GM23248 (cell line): ENCODE measurements at regions of chr16 and their contacts with region 1.

Region 1: DNA sequence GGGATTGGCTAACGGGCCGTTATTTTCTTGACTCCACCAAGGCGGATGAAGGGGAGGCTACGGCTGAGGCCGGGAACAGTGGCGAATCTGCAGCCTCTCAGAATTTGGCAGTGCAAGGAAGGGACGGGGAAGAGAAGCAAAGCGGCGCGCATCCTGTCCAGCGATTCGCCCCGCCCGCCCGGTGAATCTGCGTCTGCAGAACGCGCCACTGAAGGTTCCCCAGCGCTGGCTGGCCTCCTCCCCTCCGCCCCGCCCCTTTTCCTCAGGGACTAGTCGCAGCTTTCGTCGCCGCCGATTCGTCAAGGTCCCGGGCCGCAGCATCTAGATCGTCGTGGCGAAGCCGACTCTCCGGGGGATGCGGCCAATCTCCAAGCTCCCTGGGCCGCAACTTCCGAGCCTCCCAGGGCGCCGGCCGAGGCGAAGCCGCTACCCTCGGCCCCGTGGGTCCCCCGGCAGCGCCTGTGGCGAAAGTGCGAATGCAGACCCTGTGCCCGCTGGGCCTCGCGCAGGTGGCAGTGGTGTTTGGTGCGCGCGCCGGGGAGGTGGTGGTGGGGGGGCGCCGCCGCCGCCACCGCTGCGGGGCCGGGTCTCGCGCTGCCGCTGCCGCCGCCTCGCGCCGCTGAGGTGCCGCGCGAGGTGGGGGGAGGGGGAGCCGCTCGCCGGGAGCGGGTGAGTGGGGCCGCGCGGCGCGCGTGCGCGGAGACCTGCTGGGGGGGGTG is at the start of gene SETD1A:
- DNase-seq: peak; percentile 99
- H3K4me3 ChIP-seq: peak within 1 kb of the TSS; percentile 98
- H3K27ac ChIP-seq: peak within 1 kb of the TSS; percentile 100
- H3K4me1 ChIP-seq: peaks cover 7% of the 10 kb centered on the region
- H3K27me3 ChIP-seq: no peaks in the 10 kb centered on the region
- total RNA-seq, gene SETD1A: 2.0 and 2.3 TPM in 2 replicates

Region 2: GRCh38 chr16:30761427-30761927 is 196.1 kb before region 1 on chr16:
- in situ Hi-C with region 1: no loop called
- DNase-seq: peak; percentile 61
- H3K4me3 ChIP-seq: peak overlapping the region; percentile 79
- H3K27ac ChIP-seq: peak overlapping the region; percentile 52
- H3K4me1 ChIP-seq: peaks cover 14% of the 10 kb centered on the region
- H3K27me3 ChIP-seq: no peaks in the 10 kb centered on the region

Region 3: GRCh38 chr16:31022544-31023251 is 65.1 kb after region 1 on chr16:
- in situ Hi-C with region 1: no loop called
- DNase-seq: peak; percentile 2
- H3K4me3 ChIP-seq: no peak overlapping the region
- H3K27ac ChIP-seq: no peak overlapping the region
- H3K4me1 ChIP-seq: no peaks in the 10 kb centered on the region
- H3K27me3 ChIP-seq: no peaks in the 10 kb centered on the region

Region 4: GRCh38 chr16:31874366-31875111 is 916.9 kb after region 1 on chr16:
- in situ Hi-C with region 1: loop called (anchors 25 kb)
- DNase-seq: peak; percentile 69
- H3K4me3 ChIP-seq: peak overlapping the region; percentile 94
- H3K27ac ChIP-seq: peak overlapping the region; percentile 94
- H3K4me1 ChIP-seq: peaks cover 39% of the 10 kb centered on the region
- H3K27me3 ChIP-seq: no peaks in the 10 kb centered on the region